Natural killer cell (primary cell): ENCODE measurements at regions of chr16 and their contacts with region 1.

Region 1: GRCh38 chr16:23847948-23848347 is 12.2 kb downstream of the PRKCB start:
- DNase-seq: peak in 1 of 2 donors; percentile 82
- ATAC-seq: peak; percentile 96 to 98 (median 97)
- H3K4me3 ChIP-seq: no peak overlapping the region
- H3K4me3 Mint-ChIP-seq: peak overlapping the region; percentile 92
- H3K27ac ChIP-seq: peak overlapping the region; percentile 36
- H3K27ac Mint-ChIP-seq: peak overlapping the region; percentile 81
- H3K4me1 ChIP-seq: peaks cover 25% of the 10 kb centered on the region
- H3K4me1 Mint-ChIP-seq: peaks cover 71 to 84% of the 10 kb centered on the region in 2 donors
- H3K27me3 ChIP-seq: no peaks in the 10 kb centered on the region
- H3K27me3 Mint-ChIP-seq: no peaks in the 10 kb centered on the region
- CTCF ChIP-seq: no peak

Region 2: DNA sequence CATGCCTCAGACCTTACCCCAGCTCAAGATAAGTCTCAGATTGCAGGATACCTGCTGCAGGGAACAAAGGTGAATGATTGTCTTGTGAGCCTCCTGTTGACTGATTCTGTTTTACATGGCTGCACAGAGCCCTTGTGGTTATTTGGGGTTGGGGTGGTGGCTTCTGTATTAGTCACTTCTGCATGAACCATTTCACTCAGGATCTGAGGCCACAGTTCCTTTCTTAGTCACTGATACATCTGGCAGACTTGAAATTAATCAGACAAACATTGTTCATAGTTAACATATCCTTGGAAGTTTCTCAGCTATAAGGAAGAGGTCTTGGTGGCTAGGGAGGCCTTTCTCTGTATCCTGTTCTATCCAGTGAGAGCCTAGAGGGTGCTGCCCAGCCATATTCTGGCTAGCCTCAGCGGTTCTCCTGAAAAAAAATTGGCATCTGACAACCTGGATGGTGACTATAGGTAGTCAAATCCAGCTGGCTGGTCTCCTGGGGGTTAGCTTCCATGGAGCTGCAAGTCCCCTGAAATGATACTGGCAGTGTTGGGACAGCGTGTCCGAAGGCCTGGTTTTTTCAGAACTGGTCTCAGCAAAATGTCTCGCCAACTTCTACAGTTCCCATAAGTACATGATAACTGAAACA is 177.7 kb before region 1 on chr16:
- intact Hi-C with region 1: no loop called
- DNase-seq: no peak
- ATAC-seq: no peak
- H3K4me3 ChIP-seq: no peak overlapping the region
- H3K4me3 Mint-ChIP-seq: no peak overlapping the region
- H3K27ac ChIP-seq: no peak overlapping the region
- H3K27ac Mint-ChIP-seq: peak overlapping the region in 1 of 2 donors; percentile 42
- H3K4me1 ChIP-seq: no peaks in the 10 kb centered on the region
- H3K4me1 Mint-ChIP-seq: peaks cover 0 to 8% of the 10 kb centered on the region in 2 donors
- H3K27me3 ChIP-seq: no peaks in the 10 kb centered on the region
- H3K27me3 Mint-ChIP-seq: no peaks in the 10 kb centered on the region
- CTCF ChIP-seq: no peak

Region 3: GRCh38 chr16:23742766-23743165 is 105.2 kb before region 1 on chr16:
- intact Hi-C with region 1: no loop called
- DNase-seq: no peak
- ATAC-seq: no peak
- H3K4me3 ChIP-seq: no peak overlapping the region
- H3K4me3 Mint-ChIP-seq: no peak overlapping the region
- H3K27ac ChIP-seq: no peak overlapping the region
- H3K27ac Mint-ChIP-seq: no peak overlapping the region
- H3K4me1 ChIP-seq: no peaks in the 10 kb centered on the region
- H3K4me1 Mint-ChIP-seq: no peaks in the 10 kb centered on the region
- H3K27me3 ChIP-seq: no peaks in the 10 kb centered on the region
- H3K27me3 Mint-ChIP-seq: peaks cover 35 to 48% of the 10 kb centered on the region in 2 donors
- CTCF ChIP-seq: no peak

Region 4: DNA sequence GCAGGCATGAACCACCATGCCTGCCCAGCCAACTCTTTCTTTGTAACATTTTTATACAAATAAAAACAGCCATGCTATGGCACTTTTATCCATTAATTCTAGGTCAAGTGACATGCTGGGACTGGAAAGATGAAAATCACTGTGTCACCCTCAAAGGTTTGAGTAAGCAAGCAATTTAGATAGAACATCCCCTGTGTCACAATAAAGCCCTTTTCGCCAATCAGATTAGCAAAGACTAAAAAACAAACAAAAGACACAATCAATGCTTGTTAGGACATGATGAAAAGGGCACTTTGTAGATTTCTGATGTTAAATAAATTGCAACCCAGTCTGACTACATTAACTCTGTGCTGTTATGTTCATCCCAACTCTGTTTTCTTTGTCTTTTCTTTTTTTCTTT is 66.8 kb before region 1 on chr16:
- intact Hi-C with region 1: no loop called
- DNase-seq: no peak
- ATAC-seq: no peak
- H3K4me3 ChIP-seq: no peak overlapping the region
- H3K4me3 Mint-ChIP-seq: no peak overlapping the region
- H3K27ac ChIP-seq: no peak overlapping the region
- H3K27ac Mint-ChIP-seq: no peak overlapping the region
- H3K4me1 ChIP-seq: no peaks in the 10 kb centered on the region
- H3K4me1 Mint-ChIP-seq: no peaks in the 10 kb centered on the region
- H3K27me3 ChIP-seq: peaks cover 2% of the 10 kb centered on the region
- H3K27me3 Mint-ChIP-seq: peaks cover 15 to 29% of the 10 kb centered on the region in 2 donors
- CTCF ChIP-seq: no peak

Region 5: DNA sequence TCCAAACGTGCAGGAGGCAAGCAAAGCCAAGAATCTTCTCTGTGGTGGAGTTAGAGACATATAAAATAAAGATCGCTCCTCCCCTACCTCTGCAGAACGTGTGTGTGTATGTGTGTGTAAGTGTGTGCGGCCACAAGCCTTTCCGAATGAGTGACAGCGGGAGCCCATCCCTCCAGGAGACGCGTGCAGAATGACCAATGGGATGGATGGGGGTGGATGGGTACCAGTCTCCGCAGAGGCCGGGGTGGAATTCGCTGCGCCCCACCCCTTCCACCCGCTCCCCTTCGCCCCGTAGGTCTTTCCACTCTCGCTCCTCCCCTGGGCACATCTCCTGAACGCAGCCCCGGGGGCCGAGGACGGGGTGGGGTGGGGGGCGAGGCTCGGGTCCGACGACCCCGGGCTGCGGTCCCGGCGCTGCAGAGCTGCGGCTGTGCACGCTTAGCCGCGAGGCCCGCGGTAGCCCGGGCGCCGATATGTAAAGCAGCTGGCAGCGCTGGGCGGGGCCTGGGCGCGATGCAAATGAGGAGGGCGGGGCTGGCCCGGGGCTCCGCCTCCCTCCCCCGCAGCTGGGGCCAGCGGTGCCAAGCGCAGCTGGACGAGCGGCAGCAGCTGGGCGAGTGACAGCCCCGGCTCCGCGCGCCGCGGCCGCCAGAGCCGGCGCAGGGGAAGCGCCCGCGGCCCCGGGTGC is 12.4 kb before region 1 on chr16 and contains the start of gene PRKCB:
- intact Hi-C with region 1: loop called (anchors 1 kb)
- DNase-seq: peak; percentile 95
- ATAC-seq: peak; percentile 95 to 97 (median 95)
- H3K4me3 ChIP-seq: peak within 1 kb of the TSS; percentile 77
- H3K4me3 Mint-ChIP-seq: peak within 1 kb of the TSS; percentile 99
- H3K27ac ChIP-seq: peak within 1 kb of the TSS; percentile 8
- H3K27ac Mint-ChIP-seq: peak within 1 kb of the TSS; percentile 83 to 91
- H3K4me1 ChIP-seq: peaks cover 34% of the 10 kb centered on the region
- H3K4me1 Mint-ChIP-seq: peaks cover 43 to 47% of the 10 kb centered on the region in 2 donors
- H3K27me3 ChIP-seq: no peaks in the 10 kb centered on the region
- H3K27me3 Mint-ChIP-seq: no peaks in the 10 kb centered on the region
- CTCF ChIP-seq: no peak
- total RNA-seq, gene PRKCB: 182 to 222 (median 183) TPM

Region 6: DNA sequence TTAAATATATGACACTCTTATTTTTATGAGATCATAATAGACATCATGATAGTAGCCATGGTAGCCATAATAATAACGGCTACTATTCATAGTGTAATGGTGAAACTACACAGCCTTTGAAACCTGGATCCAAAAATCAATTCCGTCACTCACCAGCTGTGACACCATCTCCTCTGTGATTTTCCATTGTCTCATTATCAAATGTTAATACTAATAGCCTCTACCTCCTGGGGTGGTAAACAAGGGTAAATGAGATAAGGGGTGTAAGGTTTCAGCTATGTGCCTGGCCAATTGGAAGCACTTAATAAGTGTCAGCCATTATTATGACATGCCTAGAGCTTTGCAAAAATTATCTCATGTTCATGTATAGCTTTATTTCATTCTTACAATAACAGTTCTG is 496.8 kb after region 1 on chr16:
- intact Hi-C with region 1: no loop called
- DNase-seq: no peak
- ATAC-seq: no peak
- H3K4me3 ChIP-seq: no peak overlapping the region
- H3K4me3 Mint-ChIP-seq: no peak overlapping the region
- H3K27ac ChIP-seq: no peak overlapping the region
- H3K27ac Mint-ChIP-seq: no peak overlapping the region
- H3K4me1 ChIP-seq: no peaks in the 10 kb centered on the region
- H3K4me1 Mint-ChIP-seq: peaks cover 0 to 5% of the 10 kb centered on the region in 2 donors
- H3K27me3 ChIP-seq: no peaks in the 10 kb centered on the region
- H3K27me3 Mint-ChIP-seq: peaks cover 11 to 12% of the 10 kb centered on the region in 2 donors
- CTCF ChIP-seq: no peak